Activated naive CD4-positive, alpha-beta T cell treated with anti-CD3 and anti-CD28 coated beads for 36 hours (primary cell): ENCODE measurements at regions of chr2 and their contacts with region 1.

Region 1: DNA sequence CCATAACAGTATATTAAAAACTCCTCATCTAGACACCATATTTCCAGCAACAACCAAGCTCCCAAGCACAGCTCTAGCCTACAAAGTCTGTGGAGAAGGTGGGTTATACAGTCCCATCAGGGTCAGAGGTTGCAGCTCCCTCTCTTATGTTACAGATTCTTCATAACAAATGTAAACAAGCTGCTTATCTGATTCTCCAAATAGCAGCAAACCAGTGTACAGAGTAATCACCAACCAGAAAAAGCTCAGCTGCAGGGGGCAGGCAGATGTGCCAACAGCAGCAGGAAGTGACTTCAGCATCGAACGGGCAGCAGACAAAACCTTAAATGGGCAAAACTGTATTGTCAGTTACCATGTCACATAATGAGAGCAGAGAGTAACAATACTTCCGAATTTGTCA is 52.9 kb upstream of the NABP1 start:
- DNase-seq: peak; percentile 72
- H3K4me3 Mint-ChIP-seq: no peak overlapping the region
- H3K27ac Mint-ChIP-seq: peak overlapping the region; percentile 89
- H3K4me1 Mint-ChIP-seq: peaks cover 83% of the 10 kb centered on the region
- H3K27me3 Mint-ChIP-seq: no peaks in the 10 kb centered on the region

Region 2: GRCh38 chr2:191255756-191256312 is 369.2 kb before region 1 on chr2:
- CTCF ChIA-PET with region 1: no interaction called
- intact Hi-C with region 1: no loop called
- DNase-seq: no peak
- H3K4me3 Mint-ChIP-seq: no peak overlapping the region
- H3K27ac Mint-ChIP-seq: no peak overlapping the region
- H3K4me1 Mint-ChIP-seq: no peaks in the 10 kb centered on the region
- H3K27me3 Mint-ChIP-seq: no peaks in the 10 kb centered on the region

Region 3: DNA sequence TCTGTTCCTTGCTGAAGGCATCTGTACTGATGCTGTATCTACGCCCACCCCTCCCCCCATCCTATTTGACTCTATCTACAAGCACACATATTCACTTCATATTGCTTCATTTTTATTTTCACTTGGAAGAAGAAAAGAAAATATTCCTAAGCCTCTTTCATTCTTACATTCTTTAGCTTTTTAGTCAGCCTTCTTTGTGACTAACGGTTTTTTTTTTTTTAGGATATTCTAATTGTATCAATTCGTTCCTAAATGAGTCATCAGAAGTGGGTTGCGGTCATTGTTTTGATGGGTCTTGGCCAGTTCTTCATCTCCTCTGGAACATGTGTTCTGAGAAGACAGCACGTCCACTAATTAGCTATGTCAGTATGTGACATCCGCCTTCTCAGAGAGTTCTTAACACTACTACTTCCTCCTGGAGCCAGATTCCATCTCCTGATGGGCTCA is 291.1 kb before region 1 on chr2:
- CTCF ChIA-PET with region 1: no interaction called
- intact Hi-C with region 1: no loop called
- DNase-seq: no peak
- H3K4me3 Mint-ChIP-seq: no peak overlapping the region
- H3K27ac Mint-ChIP-seq: no peak overlapping the region
- H3K4me1 Mint-ChIP-seq: no peaks in the 10 kb centered on the region
- H3K27me3 Mint-ChIP-seq: no peaks in the 10 kb centered on the region

Region 4: GRCh38 chr2:191573216-191573615 is 51.8 kb before region 1 on chr2:
- CTCF ChIA-PET with region 1: interaction called, 7 read pairs
- intact Hi-C with region 1: loop called (anchors 1 kb)
- DNase-seq: no peak
- H3K4me3 Mint-ChIP-seq: no peak overlapping the region
- H3K27ac Mint-ChIP-seq: peak overlapping the region; percentile 89
- H3K4me1 Mint-ChIP-seq: peaks cover 54% of the 10 kb centered on the region
- H3K27me3 Mint-ChIP-seq: no peaks in the 10 kb centered on the region

Region 5: DNA sequence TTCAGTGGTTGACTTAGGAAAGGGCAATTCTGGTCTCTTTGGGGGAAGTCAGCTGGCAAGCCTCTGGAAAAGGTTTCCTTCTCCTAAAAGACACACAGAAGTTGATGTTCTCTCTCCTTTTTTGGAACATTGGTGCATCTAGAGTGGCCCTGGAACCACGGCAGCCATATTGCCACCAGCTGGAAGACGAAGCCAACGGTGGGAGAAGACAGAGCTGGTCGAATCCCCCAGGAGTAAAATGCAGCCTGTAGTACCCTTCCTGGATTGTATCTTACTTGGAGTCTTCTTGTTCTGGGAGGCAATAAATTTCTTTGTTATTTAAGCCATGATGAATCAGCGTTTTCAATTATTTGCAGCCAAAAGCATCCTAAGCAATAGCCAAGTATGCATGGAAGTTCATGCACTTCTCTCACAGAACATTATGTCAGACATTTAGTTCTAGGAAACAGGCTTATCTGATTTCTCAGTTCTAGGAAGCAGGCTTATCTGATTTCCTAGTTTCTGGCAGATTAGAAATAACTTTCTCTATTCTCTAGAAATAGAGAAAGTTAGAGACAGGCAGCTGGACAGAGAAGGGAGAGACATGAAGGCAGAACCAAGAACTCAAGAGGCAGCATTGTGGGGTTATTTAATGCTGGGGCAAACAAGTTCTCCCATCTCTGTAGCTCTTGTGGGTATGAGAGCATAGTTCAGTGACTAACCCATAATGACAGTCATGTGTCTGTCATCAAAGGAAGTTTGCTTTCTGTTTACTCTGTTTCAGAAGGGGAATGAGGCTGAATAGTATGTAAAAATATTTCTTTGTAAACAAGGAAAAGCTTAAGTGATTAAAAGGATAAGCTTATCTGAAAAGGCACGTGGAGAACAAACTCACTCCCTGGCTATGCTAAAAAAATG is 12.4 kb after region 1 on chr2:
- CTCF ChIA-PET with region 1: interaction called, 16 read pairs
- intact Hi-C with region 1: loop called (anchors 1 kb)
- DNase-seq: no peak
- H3K4me3 Mint-ChIP-seq: no peak overlapping the region
- H3K27ac Mint-ChIP-seq: peak overlapping the region; percentile 77
- H3K4me1 Mint-ChIP-seq: peaks cover 58% of the 10 kb centered on the region
- H3K27me3 Mint-ChIP-seq: no peaks in the 10 kb centered on the region

Region 6: GRCh38 chr2:191691016-191691735 is 66.2 kb after region 1 on chr2:
- CTCF ChIA-PET with region 1: interaction called, 3 read pairs
- intact Hi-C with region 1: loop called (anchors 1 kb)
- DNase-seq: peak; percentile 73
- H3K4me3 Mint-ChIP-seq: no peak overlapping the region
- H3K27ac Mint-ChIP-seq: peak overlapping the region; percentile 72
- H3K4me1 Mint-ChIP-seq: peaks cover 66% of the 10 kb centered on the region
- H3K27me3 Mint-ChIP-seq: no peaks in the 10 kb centered on the region